Left lung (tissue), 14 donors: ENCODE measurements at regions of chr3 and their contacts with region 1.

Region 1: DNA sequence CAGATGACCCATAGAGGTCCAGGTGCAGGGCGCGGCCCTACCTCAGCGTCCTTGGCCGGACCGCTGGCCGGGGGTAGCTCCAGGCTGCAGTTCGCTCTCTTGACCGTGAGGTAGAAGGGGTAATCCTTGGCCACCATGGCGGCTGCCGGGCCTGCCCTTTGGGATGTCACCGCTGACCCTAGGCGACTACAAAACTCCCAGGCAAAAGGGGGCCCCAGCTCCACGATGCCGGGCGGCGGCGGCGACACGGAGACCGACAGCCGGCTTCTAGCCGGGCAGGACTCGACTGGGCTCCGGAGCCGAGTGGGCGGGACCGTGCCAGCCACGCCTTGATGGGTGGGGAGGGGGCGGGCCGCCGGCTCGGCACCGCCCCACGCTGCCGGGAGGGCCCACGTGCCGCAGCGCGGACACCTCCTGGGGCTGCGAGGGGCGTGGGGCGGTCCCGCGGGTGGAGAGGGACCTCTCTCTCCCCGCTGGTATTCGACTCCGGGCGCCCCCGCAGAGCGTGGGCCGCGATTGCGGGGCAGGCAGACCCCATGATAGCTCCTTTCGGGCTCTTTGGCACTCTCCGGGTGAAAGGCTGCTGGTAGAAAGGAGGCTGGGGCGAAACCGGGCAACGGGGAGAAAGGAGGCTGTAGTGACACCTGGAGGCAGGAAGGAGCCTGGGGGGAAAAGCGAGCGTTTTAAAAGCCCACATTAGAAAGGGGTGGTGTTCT is at the start of gene ARHGEF3:
- DNase-seq: peak; percentile 65 to 98 (median 90)
- ATAC-seq: peak; percentile 95
- H3K4me3 ChIP-seq: peak within 1 kb of the TSS; percentile 70 to 85
- H3K27ac ChIP-seq: peak within 1 kb of the TSS; percentile 58 to 75
- H3K4me1 ChIP-seq: peaks cover 11 to 50% of the 10 kb centered on the region in 2 donors
- H3K27me3 ChIP-seq: no peaks in the 10 kb centered on the region
- CTCF ChIP-seq: peak in 1 of 2 donors; percentile 32
- polyA plus RNA-seq, gene ARHGEF3: 19.5 to 26.3 (median 23.1) TPM

Region 2: DNA sequence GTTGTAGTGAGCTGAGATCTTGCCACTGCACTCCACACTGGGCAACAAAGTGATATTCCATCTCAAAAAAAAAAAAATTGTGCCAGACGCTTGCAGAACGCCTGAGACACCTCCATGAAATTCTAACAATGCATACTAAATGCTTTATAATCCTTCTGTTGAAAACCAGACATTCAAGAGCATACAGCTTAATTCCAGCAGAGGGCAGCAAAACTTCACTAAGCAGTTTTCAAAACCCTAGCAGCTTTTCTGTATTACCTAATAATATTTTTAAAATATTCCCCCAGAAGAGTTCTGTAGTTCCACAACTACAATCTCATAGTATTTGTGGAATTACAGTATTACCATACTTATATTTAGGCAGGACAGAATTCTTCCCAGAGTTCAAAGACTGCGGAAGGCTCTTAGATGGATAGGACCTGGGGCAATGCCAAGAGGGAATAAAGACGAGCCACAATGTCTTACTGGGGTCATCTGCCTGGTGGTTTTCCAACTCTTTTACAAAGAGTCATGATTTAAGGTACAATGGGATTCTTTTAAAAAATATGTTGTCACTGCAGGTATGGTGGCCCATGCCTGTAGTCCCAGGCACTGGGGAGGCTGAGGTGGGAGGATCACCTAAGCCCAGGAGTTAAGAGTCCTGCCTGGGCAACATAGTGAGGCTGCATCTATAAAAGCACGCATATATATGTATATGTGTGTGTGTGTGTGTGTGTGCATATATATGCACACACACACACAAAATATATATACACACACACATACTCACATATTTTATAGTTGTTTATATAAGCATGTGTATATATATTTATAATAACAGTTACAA is 99.1 kb before region 1 on chr3:
- intact Hi-C with region 1: loop called in 1 of 2 experiments (anchors 5 kb)
- DNase-seq: peak in 2 of 4 donors; percentile 62 to 82
- ATAC-seq: peak; percentile 89
- H3K4me3 ChIP-seq: no peak overlapping the region
- H3K27ac ChIP-seq: no peak overlapping the region
- H3K4me1 ChIP-seq: peaks cover 0 to 7% of the 10 kb centered on the region in 2 donors
- H3K27me3 ChIP-seq: no peaks in the 10 kb centered on the region
- CTCF ChIP-seq: peak; percentile 71 to 84

Region 3: GRCh38 chr3:56980798-56981390 is 179.1 kb after region 1 on chr3:
- intact Hi-C with region 1: loop called in 1 of 2 experiments (anchors 5 kb)
- DNase-seq: peak in 2 of 4 donors; percentile 53 to 59
- ATAC-seq: peak; percentile 90
- H3K4me3 ChIP-seq: no peak overlapping the region
- H3K27ac ChIP-seq: peak overlapping the region; percentile 33 to 44
- H3K4me1 ChIP-seq: peaks cover 6 to 17% of the 10 kb centered on the region in 2 donors
- H3K27me3 ChIP-seq: no peaks in the 10 kb centered on the region
- CTCF ChIP-seq: no peak

Region 4: GRCh38 chr3:57047974-57048671 is 246.3 kb after region 1 on chr3:
- intact Hi-C with region 1: no loop called
- DNase-seq: peak in 1 of 4 donors; percentile 43
- ATAC-seq: peak; percentile 73
- H3K4me3 ChIP-seq: no peak overlapping the region
- H3K27ac ChIP-seq: no peak overlapping the region
- H3K4me1 ChIP-seq: peaks cover 0 to 6% of the 10 kb centered on the region in 2 donors
- H3K27me3 ChIP-seq: no peaks in the 10 kb centered on the region
- CTCF ChIP-seq: no peak